Posterior vena cava (tissue), 2 donors: ENCODE measurements at regions of chr9 and their contacts with region 1.

Region 1: GRCh38 chr9:89929673-89930480 is 325.1 kb downstream of the GADD45G start:
- DNase-seq: no peak

Region 2: DNA sequence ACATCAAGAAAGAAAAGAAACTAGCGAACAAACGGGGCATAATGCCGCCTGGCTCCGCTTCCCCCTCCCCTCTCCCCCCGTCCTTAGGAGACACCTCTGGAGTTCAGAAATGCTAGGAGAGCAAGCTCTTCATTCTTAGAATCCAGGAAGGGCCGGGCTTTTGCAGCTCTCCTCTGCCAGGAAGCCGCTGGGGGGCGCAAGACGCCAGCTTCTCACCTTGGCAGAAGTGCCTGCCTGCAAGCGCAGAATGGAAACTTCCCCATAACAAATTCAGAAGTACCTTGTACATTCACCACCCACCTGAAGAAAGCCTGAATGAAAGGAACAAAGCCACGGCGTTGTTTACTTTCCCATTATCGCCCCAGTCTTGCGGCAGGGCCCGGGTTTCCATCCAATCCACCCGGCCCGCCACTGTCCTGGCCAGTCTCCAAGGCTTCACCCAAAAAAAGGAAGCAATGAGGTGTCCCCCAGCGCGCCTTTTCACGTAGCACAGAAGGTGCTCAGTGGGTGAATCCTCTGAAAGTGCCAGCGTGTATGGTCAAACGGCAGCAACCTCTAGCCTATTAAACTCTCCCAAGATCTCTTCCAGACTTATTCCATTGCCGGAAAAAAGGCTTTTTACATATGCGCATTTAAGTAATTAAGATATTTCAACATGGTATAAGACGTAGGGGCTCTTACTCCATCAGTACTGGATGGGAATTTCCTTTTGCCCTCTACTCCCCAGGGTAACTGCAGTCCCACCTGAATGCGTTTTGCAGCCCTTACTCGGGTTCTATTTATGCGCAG is 326.7 kb before region 1 on chr9:
- intact Hi-C with region 1: loop called in 1 of 2 experiments (anchors 10 kb)
- DNase-seq: peak; percentile 96

Region 3: DNA sequence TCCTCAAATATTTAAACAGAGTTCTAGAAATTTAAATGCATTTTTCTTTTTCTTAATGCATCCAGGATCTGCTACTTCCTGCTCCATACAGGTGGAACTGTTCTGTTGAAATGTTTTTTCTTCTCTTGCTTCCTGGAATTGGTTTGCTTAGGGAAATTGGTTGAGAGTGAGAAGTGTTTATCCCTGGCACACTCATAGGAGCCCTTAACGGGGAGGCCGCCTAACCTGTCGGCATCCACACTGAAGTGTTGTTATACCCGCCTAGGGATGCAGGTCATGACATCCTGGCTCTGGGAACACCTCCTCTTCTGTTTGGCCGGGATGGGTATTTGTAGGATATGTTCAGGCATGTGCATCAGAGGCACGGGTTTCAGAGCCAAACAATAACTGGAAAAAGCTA is 85.3 kb before region 1 on chr9:
- intact Hi-C with region 1: loop called in 1 of 2 experiments (anchors 10 kb)
- DNase-seq: no peak

Region 4: DNA sequence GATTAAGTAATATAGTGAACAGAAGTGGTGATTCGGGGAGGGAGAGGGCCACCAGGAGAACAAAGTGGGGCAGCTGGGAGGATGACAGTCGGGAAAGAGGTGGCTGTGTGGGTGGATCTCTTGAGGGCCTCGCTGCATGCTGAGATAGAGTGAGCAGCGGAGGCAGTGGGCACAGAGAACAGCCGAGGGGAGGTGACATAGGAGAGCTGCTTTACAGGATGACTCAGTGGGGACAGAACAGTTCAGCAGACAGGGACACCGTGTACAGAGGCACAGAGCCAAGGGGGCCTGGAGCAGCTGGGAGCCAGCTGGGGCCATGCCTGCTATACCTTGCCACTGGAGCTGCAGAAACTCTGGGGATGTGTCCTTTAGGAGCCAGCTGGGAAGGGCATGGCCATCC is 51.2 kb before region 1 on chr9:
- intact Hi-C with region 1: loop called (anchors 5 to 10 kb)
- DNase-seq: no peak

Region 5: GRCh38 chr9:90086101-90086511 is 156.2 kb after region 1 on chr9:
- intact Hi-C with region 1: loop called in 1 of 2 experiments (anchors 10 kb)
- DNase-seq: no peak

Region 6: DNA sequence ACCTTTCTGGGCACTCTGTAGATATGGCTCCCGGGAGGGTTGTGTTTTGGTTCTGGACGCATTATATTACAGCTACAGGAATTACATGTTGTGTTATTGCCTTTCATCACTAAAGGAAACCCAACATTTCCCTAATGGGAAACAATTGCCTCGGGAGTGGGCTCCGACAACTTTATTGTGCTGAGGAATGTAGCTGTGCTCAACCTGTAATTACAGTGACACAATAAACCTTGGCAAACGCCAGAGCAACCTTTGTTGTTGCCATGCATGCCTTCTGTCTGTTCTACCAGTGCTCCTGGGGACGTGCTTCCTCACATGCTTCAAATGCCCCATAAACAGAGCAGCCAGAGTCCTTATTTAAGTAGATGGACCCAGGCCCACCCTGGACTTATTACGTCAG is 530.3 kb after region 1 on chr9:
- intact Hi-C with region 1: loop called in 1 of 2 experiments (anchors 10 kb)
- DNase-seq: no peak